Activated naive CD4-positive, alpha-beta T cell treated with anti-CD3 and anti-CD28 coated beads for 36 hours (primary cell): ENCODE measurements at regions of chr10 and their contacts with region 1.

Region 1: DNA sequence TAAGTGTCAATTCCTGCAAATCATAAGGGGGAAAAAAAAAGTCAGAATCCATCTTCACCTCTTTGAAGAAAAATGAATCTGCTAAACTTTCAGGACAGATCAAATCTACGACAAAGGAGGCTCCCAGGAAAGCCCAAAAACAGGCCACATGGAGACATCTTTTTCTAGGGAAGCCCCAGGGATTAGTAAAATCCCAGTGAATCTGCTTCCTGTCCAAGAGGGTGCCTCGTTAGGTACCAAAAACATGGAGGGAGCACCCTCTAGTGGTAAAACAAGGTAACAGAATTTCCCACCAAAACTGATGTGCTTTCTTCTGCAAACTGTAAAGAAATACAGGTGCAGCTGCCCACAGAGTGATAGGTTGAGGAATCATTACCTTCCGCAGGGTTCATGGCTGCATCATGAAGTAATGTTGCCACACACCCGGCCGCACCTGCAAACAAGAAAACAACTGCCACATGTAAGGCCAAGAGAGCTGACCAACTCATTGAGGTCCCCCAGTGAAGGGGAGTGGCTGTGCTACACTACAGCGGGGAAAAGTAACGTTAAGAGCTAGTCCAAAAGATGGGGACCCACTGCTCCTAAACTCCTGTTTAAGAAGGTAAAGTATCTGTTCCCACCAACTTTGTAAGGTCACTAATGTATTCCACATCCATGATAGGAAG is 7.9 kb downstream of the SLC25A28 start:
- DNase-seq: peak; percentile 31
- H3K4me3 Mint-ChIP-seq: no peak overlapping the region
- H3K27ac Mint-ChIP-seq: peak overlapping the region; percentile 33
- H3K4me1 Mint-ChIP-seq: peaks cover 30% of the 10 kb centered on the region
- H3K27me3 Mint-ChIP-seq: no peaks in the 10 kb centered on the region

Region 2: DNA sequence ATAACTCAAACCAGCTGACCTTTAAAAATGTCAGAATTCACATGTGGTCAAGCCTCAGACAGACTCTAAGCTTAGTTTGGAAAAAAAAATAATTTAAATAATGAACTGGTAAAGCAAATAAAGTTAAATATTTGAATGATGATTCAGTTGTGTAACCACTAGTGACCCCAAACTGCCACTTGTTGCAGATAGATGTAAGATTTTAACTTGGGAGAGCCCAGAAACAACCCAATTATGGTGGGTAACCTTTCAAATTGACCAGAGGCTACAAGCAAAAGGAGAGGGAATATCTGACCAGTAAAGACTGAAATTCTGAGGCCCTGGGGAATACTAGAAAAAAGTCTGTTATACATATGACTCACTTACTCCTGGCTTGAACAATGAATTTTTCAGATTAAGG is 644.7 kb before region 1 on chr10:
- CTCF ChIA-PET with region 1: no interaction called
- intact Hi-C with region 1: no loop called
- DNase-seq: no peak
- H3K4me3 Mint-ChIP-seq: no peak overlapping the region
- H3K27ac Mint-ChIP-seq: no peak overlapping the region
- H3K4me1 Mint-ChIP-seq: no peaks in the 10 kb centered on the region
- H3K27me3 Mint-ChIP-seq: peaks cover 6% of the 10 kb centered on the region

Region 3: GRCh38 chr10:99370993-99371392 is 241.3 kb before region 1 on chr10:
- CTCF ChIA-PET with region 1: no interaction called
- intact Hi-C with region 1: no loop called
- DNase-seq: peak; percentile 29
- H3K4me3 Mint-ChIP-seq: no peak overlapping the region
- H3K27ac Mint-ChIP-seq: no peak overlapping the region
- H3K4me1 Mint-ChIP-seq: peaks cover 7% of the 10 kb centered on the region
- H3K27me3 Mint-ChIP-seq: peaks cover 35% of the 10 kb centered on the region

Region 4: GRCh38 chr10:99435986-99436638 is 176.2 kb before region 1 on chr10:
- CTCF ChIA-PET with region 1: interaction called, 57 read pairs
- intact Hi-C with region 1: loop called (anchors 1 kb)
- DNase-seq: no peak
- H3K4me3 Mint-ChIP-seq: no peak overlapping the region
- H3K27ac Mint-ChIP-seq: no peak overlapping the region
- H3K4me1 Mint-ChIP-seq: peaks cover 21% of the 10 kb centered on the region
- H3K27me3 Mint-ChIP-seq: no peaks in the 10 kb centered on the region

Region 5: GRCh38 chr10:99560277-99561126 is 51.8 kb before region 1 on chr10:
- CTCF ChIA-PET with region 1: interaction called, 53 read pairs
- intact Hi-C with region 1: loop called (anchors 1 kb)
- DNase-seq: peak; percentile 69
- H3K4me3 Mint-ChIP-seq: no peak overlapping the region
- H3K27ac Mint-ChIP-seq: no peak overlapping the region
- H3K4me1 Mint-ChIP-seq: peaks cover 3% of the 10 kb centered on the region
- H3K27me3 Mint-ChIP-seq: peaks cover 19% of the 10 kb centered on the region